Activated CD4-positive, alpha-beta memory T cell treated with anti-CD3 and anti-CD28 coated beads for 36 hours (primary cell): ENCODE measurements at regions of chr1 and their contacts with region 1.

Region 1: GRCh38 chr1:110060034-110060661 is 10.3 kb downstream of the ALX3 start:
- DNase-seq: peak; percentile 85
- H3K4me3 Mint-ChIP-seq: no peak overlapping the region
- H3K27ac Mint-ChIP-seq: no peak overlapping the region
- H3K4me1 Mint-ChIP-seq: no peaks in the 10 kb centered on the region
- H3K27me3 Mint-ChIP-seq: no peaks in the 10 kb centered on the region

Region 2: GRCh38 chr1:110076789-110077500 is 16.8 kb after region 1 on chr1:
- CTCF ChIA-PET with region 1: interaction called, 25 read pairs
- POLR2A ChIA-PET with region 1: no interaction called
- intact Hi-C with region 1: no loop called
- DNase-seq: no peak
- H3K4me3 Mint-ChIP-seq: no peak overlapping the region
- H3K27ac Mint-ChIP-seq: no peak overlapping the region
- H3K4me1 Mint-ChIP-seq: no peaks in the 10 kb centered on the region
- H3K27me3 Mint-ChIP-seq: peaks cover 28% of the 10 kb centered on the region

Region 3: DNA sequence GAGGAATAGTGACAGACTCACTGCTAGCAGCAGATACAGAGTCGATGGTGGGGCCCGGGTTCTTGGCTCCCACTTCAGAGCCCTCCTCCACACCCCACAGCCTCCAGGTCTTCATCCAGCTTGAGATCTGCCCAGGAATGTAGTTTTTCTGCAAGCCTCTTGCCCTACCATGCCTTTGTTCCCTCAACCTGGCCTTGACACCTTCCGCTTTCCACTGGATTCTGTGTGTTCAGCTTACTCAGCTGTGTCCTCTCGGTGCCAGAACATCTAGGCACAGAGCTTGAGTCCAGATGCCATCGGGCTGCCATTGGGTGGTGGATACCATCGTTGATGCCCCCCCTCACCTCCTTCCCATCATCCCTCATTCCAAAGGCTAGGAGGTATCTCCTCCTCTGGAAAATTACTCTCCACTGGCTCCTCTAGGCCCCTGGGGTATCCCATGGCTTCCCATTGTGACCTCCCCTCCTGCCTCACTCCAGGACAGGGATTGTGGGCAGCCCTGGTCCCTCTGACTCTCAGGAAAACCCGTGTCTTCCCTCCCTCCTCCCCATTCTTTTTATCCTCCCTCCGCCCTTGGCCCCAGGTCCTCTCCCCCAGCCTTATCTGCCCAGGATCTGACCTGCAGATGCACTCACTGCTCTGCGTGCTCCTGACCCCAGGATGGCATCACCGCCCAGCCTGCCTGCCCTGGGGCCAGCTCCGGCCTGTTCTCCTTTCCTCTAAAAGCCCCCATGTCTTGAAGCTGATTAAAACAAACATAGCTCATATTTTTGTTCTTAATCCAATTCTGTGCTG is 37.9 kb after region 1 on chr1:
- CTCF ChIA-PET with region 1: interaction called, 115 read pairs
- POLR2A ChIA-PET with region 1: no interaction called
- intact Hi-C with region 1: no loop called
- DNase-seq: no peak
- H3K4me3 Mint-ChIP-seq: no peak overlapping the region
- H3K27ac Mint-ChIP-seq: no peak overlapping the region
- H3K4me1 Mint-ChIP-seq: no peaks in the 10 kb centered on the region
- H3K27me3 Mint-ChIP-seq: peaks cover 5% of the 10 kb centered on the region

Region 4: DNA sequence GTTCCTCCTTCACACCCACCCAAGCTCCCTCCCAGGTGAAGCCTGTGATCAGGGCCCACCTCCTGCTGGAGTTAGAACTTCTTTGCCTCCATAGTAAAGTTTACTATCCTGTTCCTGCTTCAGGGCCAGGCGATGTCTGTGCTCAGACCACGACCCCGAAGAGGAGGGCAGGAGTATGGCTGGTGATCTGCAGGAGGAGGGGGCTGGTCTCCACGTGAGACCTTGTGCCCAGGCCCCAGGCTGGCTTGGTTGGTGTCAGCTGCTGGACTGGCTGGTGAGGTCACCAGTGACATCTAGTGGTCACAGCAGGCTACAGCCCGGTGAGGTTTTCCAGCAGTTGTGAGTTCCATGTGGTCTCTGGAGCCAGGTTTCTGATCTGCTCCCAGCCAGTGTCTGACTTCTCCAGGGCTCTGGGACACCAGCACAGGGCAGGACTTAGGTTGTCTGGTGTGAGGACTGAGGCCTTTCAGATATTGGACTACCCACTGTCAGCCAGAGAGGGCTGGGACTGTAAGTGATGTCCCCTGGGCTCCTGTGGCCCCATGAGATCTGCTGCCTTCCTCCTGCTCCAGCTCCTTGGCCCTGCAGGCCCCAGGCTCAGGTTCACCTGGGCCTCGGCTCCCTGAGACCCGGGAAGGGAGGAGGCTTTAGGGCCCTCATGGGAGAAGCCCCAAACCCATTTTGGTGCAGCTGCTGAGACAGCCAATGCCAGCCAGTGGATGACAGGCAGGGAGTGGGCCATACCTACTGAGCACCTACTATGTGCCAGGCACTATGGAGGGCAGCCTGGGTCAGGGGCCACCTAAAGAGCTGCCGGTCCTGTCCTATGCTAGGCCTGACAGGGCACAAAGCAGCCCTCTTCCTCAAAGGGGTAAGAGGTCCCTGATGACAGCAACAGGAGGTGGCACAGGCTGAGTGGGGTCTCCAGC is 46.1 kb after region 1 on chr1:
- CTCF ChIA-PET with region 1: interaction called, 115 read pairs
- POLR2A ChIA-PET with region 1: no interaction called
- intact Hi-C with region 1: no loop called
- DNase-seq: peak; percentile 77
- H3K4me3 Mint-ChIP-seq: no peak overlapping the region
- H3K27ac Mint-ChIP-seq: no peak overlapping the region
- H3K4me1 Mint-ChIP-seq: no peaks in the 10 kb centered on the region
- H3K27me3 Mint-ChIP-seq: no peaks in the 10 kb centered on the region

Region 5: DNA sequence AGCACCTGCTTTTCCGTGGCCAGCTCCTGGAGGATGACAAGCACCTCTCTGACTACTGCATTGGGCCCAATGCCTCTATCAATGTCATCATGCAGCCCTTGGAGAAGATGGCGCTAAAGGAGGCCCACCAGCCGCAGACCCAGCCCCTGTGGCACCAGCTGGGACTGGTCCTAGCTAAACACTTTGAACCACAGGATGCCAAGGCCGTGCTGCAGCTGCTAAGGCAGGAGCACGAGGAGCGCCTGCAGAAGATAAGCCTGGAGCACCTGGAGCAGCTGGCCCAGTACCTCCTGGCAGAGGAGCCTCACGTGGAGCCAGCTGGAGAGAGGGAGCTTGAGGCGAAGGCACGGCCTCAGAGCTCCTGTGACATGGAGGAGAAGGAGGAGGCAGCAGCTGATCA is 52.5 kb after region 1 on chr1:
- CTCF ChIA-PET with region 1: interaction called, 10 read pairs
- POLR2A ChIA-PET with region 1: no interaction called
- intact Hi-C with region 1: no loop called
- DNase-seq: no peak
- H3K4me3 Mint-ChIP-seq: no peak overlapping the region
- H3K27ac Mint-ChIP-seq: no peak overlapping the region
- H3K4me1 Mint-ChIP-seq: no peaks in the 10 kb centered on the region
- H3K27me3 Mint-ChIP-seq: peaks cover 17% of the 10 kb centered on the region